ENCODE measurements at regions of chr16 and their contacts with region 1.

Region 1: GRCh38 chr16:69150146-69150865 is 17.9 kb downstream of the UTP4 start:
- DNase-seq: peak; percentile 53 to 68 (median 64)
- H3K4me3 ChIP-seq: no peak overlapping the region
- H3K4me3 Mint-ChIP-seq: no peak overlapping the region
- H3K27ac ChIP-seq: no peak overlapping the region
- H3K27ac Mint-ChIP-seq: no peak overlapping the region
- H3K4me1 ChIP-seq: no peaks in the 10 kb centered on the region
- H3K4me1 Mint-ChIP-seq: peaks cover 0 to 4% (median 3%) of the 10 kb centered on the region in 4 donors
- H3K27me3 ChIP-seq: no peaks in the 10 kb centered on the region
- H3K27me3 Mint-ChIP-seq: no peaks in the 10 kb centered on the region

Region 2: GRCh38 chr16:69166221-69166833 is 16.0 kb after region 1 on chr16:
- CTCF ChIA-PET with region 1: interaction called, 61 read pairs
- POLR2A ChIA-PET with region 1: interaction called, 3 read pairs
- intact Hi-C with region 1: no loop called
- DNase-seq: peak; percentile 17 to 70 (median 23)
- H3K4me3 ChIP-seq: no peak overlapping the region
- H3K4me3 Mint-ChIP-seq: peak overlapping the region in 7 of 8 donors; percentile 2 to 63 (median 16)
- H3K27ac ChIP-seq: peak overlapping the region; percentile 15
- H3K27ac Mint-ChIP-seq: peak overlapping the region; percentile 45 to 85 (median 76)
- H3K4me1 ChIP-seq: peaks cover 24% of the 10 kb centered on the region
- H3K4me1 Mint-ChIP-seq: peaks cover 23 to 26% (median 25%) of the 10 kb centered on the region in 4 donors
- H3K27me3 ChIP-seq: no peaks in the 10 kb centered on the region
- H3K27me3 Mint-ChIP-seq: no peaks in the 10 kb centered on the region

Region 3: GRCh38 chr16:69253870-69254341 is 103.6 kb after region 1 on chr16:
- CTCF ChIA-PET with region 1: interaction called, 15 read pairs
- POLR2A ChIA-PET with region 1: interaction called, 3 read pairs
- intact Hi-C with region 1: no loop called
- DNase-seq: peak in 4 of 5 donors; percentile 18 to 36 (median 28)
- H3K4me3 ChIP-seq: no peak overlapping the region
- H3K4me3 Mint-ChIP-seq: peak overlapping the region; percentile 41 to 76 (median 63)
- H3K27ac ChIP-seq: peak overlapping the region; percentile 35
- H3K27ac Mint-ChIP-seq: peak overlapping the region; percentile 43 to 93 (median 69)
- H3K4me1 ChIP-seq: peaks cover 25% of the 10 kb centered on the region
- H3K4me1 Mint-ChIP-seq: peaks cover 14 to 33% (median 21%) of the 10 kb centered on the region in 4 donors
- H3K27me3 ChIP-seq: no peaks in the 10 kb centered on the region
- H3K27me3 Mint-ChIP-seq: no peaks in the 10 kb centered on the region

Region 4: DNA sequence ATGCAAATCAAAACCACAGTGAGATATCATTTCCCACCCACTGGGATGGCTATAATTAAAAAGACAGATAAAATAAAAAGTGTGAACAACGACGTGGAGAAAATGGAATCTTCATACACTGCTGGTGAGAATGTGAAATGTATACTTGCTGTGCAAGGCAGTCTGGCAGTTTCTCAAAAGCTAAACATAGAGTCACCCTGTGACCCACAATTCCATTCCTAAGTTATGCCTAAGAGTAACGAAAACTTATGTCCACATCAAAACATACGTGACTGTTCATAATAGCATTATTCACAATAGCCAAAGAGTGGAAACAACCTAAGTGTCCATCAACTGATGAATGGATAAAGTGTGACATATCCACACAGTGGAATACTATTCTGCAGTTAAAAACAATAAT is 122.7 kb after region 1 on chr16:
- CTCF ChIA-PET with region 1: interaction called, 11 read pairs
- POLR2A ChIA-PET with region 1: no interaction called
- intact Hi-C with region 1: no loop called
- DNase-seq: no peak
- H3K4me3 ChIP-seq: no peak overlapping the region
- H3K4me3 Mint-ChIP-seq: no peak overlapping the region
- H3K27ac ChIP-seq: no peak overlapping the region
- H3K27ac Mint-ChIP-seq: peak overlapping the region in 1 of 7 donors; percentile 53
- H3K4me1 ChIP-seq: no peaks in the 10 kb centered on the region
- H3K4me1 Mint-ChIP-seq: peaks cover 0 to 8% (median 1%) of the 10 kb centered on the region in 4 donors
- H3K27me3 ChIP-seq: no peaks in the 10 kb centered on the region
- H3K27me3 Mint-ChIP-seq: no peaks in the 10 kb centered on the region